ENCODE measurements at regions of chr1 and their contacts with region 1.

Region 1: DNA sequence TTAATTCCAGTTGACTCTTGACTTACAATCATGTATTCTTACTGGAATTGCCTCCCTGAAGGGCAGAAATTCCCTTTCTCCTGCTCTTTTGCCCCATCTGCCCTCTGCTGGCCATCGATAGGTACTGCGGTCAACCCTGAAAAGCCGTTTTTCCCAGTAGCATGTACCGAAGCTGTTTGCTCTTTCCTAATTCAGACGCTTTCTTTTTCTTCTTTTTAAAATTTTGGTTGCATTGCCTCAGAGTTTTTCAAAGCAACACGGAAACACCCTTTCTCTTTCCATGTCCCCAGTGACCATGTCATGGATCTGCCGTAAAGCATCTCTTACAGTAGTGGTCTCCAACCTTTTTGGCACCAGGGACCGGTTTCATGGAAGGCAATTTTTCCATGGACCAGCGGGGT is 164.2 kb upstream of the C1orf21 start:
- DNase-seq: peak; percentile 70
- H3K4me3 ChIP-seq: peak overlapping the region in 1 of 4 donors; percentile 8
- H3K27ac ChIP-seq: no peak overlapping the region
- H3K4me1 ChIP-seq: peaks cover 0 to 6% (median 2%) of the 10 kb centered on the region in 4 donors
- H3K27me3 ChIP-seq: no peaks in the 10 kb centered on the region
- CTCF ChIP-seq: peak; percentile 77 to 96 (median 92)
- EP300 ChIP-seq: no peak
- POLR2A ChIP-seq: no peak

Region 2: GRCh38 chr1:184664042-184664655 is 441.5 kb after region 1 on chr1:
- intact Hi-C with region 1: loop called (anchors 5 kb)
- DNase-seq: peak; percentile 92
- H3K4me3 ChIP-seq: peak overlapping the region in 3 of 4 donors; percentile 12 to 34 (median 29)
- H3K27ac ChIP-seq: peak overlapping the region in 1 of 4 donors; percentile 29
- H3K4me1 ChIP-seq: peaks cover 0 to 36% (median 13%) of the 10 kb centered on the region in 4 donors
- H3K27me3 ChIP-seq: no peaks in the 10 kb centered on the region
- CTCF ChIP-seq: peak; percentile 85 to 93 (median 92)
- EP300 ChIP-seq: no peak
- POLR2A ChIP-seq: no peak

Measured in sigmoid colon (tissue), 7 donors.